ENCODE measurements at regions of chrX and their contacts with region 1.

Region 1: DNA sequence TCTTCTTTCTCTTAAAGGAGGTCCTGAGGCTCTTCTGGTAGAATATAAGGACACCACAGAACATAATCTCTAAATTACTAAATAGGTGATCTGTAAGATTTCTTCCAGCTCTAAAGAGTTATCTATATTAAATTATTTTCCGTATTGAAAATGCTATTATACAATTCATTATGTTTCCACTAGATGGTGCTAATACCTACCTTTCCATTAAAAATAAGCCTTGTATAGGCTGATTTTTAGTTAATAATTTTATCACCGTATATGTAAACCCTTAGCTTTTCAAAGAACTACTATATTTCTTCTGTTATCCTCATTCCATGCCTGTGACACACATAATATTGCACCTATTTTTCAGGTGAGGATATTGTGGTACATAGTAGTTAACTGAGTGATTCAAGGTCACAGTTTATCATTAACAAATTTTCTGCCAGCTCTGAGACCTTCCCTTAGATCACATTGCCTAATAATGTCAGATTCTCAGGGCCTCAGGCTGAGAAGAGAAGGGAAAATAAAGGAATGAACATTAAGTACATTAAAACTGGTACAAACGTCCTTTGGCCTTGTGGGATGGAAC is 138.8 kb downstream of the TEX11 start:
- DNase-seq: no peak
- ATAC-seq: no peak
- H3K4me3 ChIP-seq: no peak overlapping the region
- H3K27ac ChIP-seq: no peak overlapping the region
- H3K4me1 ChIP-seq: no peaks in the 10 kb centered on the region
- H3K27me3 ChIP-seq: no peaks in the 10 kb centered on the region
- CTCF ChIP-seq: peak; percentile 21; the same call in 1 of the 2 replicates
- EP300 ChIP-seq: no peak
- POLR2A ChIP-seq: no peak
- RAD21 ChIP-seq: no peak

Region 2: GRCh38 chrX:70960728-70961127 is 191.0 kb after region 1 on chrX:
- CTCF ChIA-PET with region 1: no interaction called
- POLR2A ChIA-PET with region 1: no interaction called
- in situ Hi-C with region 1: no loop called
- intact Hi-C with region 1: loop called (anchors 5 kb)
- DNase-seq: no peak
- ATAC-seq: no peak
- H3K4me3 ChIP-seq: no peak overlapping the region
- H3K27ac ChIP-seq: no peak overlapping the region
- H3K4me1 ChIP-seq: no peaks in the 10 kb centered on the region
- H3K27me3 ChIP-seq: no peaks in the 10 kb centered on the region
- CTCF ChIP-seq: peak; percentile 25; the same call in 1 of the 2 replicates
- EP300 ChIP-seq: no peak
- POLR2A ChIP-seq: no peak
- RAD21 ChIP-seq: no peak